ENCODE measurements at regions of chr12 and their contacts with region 1.

Region 1: GRCh38 chr12:90940872-90941499 is 14.0 kb downstream of the CCER1 start:
- DNase-seq: peak; percentile 75
- H3K4me3 ChIP-seq: no peak overlapping the region
- H3K27ac ChIP-seq: no peak overlapping the region
- H3K4me1 ChIP-seq: peaks cover 18% of the 10 kb centered on the region
- H3K27me3 ChIP-seq: no peaks in the 10 kb centered on the region
- CTCF ChIP-seq: peak; percentile 38 to 47
- POLR2A ChIP-seq: no peak

Region 2: GRCh38 chr12:89542912-89543592 is 1397.9 kb before region 1 on chr12:
- CTCF ChIA-PET with region 1: interaction called, 55 read pairs
- POLR2A ChIA-PET with region 1: no interaction called
- dilution Hi-C with region 1: no loop called
- intact Hi-C with region 1: loop called (anchors 1 kb)
- DNase-seq: peak; percentile 79
- H3K4me3 ChIP-seq: no peak overlapping the region
- H3K27ac ChIP-seq: no peak overlapping the region
- H3K4me1 ChIP-seq: peaks cover 20% of the 10 kb centered on the region
- H3K27me3 ChIP-seq: no peaks in the 10 kb centered on the region
- CTCF ChIP-seq: peak; percentile 80 to 82
- POLR2A ChIP-seq: no peak

Region 3: DNA sequence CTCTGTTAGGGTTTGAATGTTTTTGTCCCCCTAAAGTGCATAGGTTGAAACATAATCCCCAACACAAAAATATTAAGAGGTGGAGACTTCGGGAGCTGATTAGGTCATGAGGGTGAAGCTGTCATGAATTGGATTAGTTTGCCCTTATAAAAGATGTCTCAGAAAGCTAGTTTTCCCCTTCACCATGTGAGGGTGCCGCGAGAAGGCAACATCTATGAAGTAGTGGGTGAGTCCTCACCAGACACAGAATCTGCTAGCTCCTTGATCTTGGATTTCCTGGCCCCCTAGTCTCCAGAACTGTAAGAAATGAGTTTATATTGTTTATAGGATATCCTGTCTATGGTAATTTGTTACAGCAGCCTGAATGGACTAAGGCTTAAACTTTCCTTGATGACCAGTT is 930.9 kb before region 1 on chr12:
- CTCF ChIA-PET with region 1: interaction called, 17 read pairs
- POLR2A ChIA-PET with region 1: no interaction called
- dilution Hi-C with region 1: no loop called
- intact Hi-C with region 1: no loop called
- DNase-seq: peak; percentile 37
- H3K4me3 ChIP-seq: no peak overlapping the region
- H3K27ac ChIP-seq: no peak overlapping the region
- H3K4me1 ChIP-seq: no peaks in the 10 kb centered on the region
- H3K27me3 ChIP-seq: no peaks in the 10 kb centered on the region
- CTCF ChIP-seq: peak in 1 of 2 donors; percentile 14
- POLR2A ChIP-seq: no peak

Region 4: GRCh38 chr12:90695415-90695814 is 245.6 kb before region 1 on chr12:
- CTCF ChIA-PET with region 1: interaction called, 11 read pairs
- POLR2A ChIA-PET with region 1: no interaction called
- dilution Hi-C with region 1: no loop called
- intact Hi-C with region 1: loop called (anchors 1 kb)
- DNase-seq: peak; percentile 27
- H3K4me3 ChIP-seq: no peak overlapping the region
- H3K27ac ChIP-seq: no peak overlapping the region
- H3K4me1 ChIP-seq: peaks cover 13% of the 10 kb centered on the region
- H3K27me3 ChIP-seq: no peaks in the 10 kb centered on the region
- CTCF ChIP-seq: peak in 1 of 2 donors; percentile 3
- POLR2A ChIP-seq: no peak

Region 5: GRCh38 chr12:90959538-90960139 is 18.7 kb after region 1 on chr12:
- CTCF ChIA-PET with region 1: interaction called, 96 read pairs
- POLR2A ChIA-PET with region 1: no interaction called
- dilution Hi-C with region 1: no loop called
- intact Hi-C with region 1: loop called (anchors 1 kb)
- DNase-seq: peak; percentile 54
- H3K4me3 ChIP-seq: no peak overlapping the region
- H3K27ac ChIP-seq: no peak overlapping the region
- H3K4me1 ChIP-seq: no peaks in the 10 kb centered on the region
- H3K27me3 ChIP-seq: no peaks in the 10 kb centered on the region
- CTCF ChIP-seq: peak; percentile 57 to 74
- POLR2A ChIP-seq: no peak

Region 6: GRCh38 chr12:91326058-91327027 is 385.4 kb after region 1 on chr12:
- CTCF ChIA-PET with region 1: interaction called, 39 read pairs
- POLR2A ChIA-PET with region 1: no interaction called
- dilution Hi-C with region 1: no loop called
- intact Hi-C with region 1: no loop called
- DNase-seq: peak; percentile 59
- H3K4me3 ChIP-seq: no peak overlapping the region
- H3K27ac ChIP-seq: no peak overlapping the region
- H3K4me1 ChIP-seq: no peaks in the 10 kb centered on the region
- H3K27me3 ChIP-seq: no peaks in the 10 kb centered on the region
- CTCF ChIP-seq: peak; percentile 49 to 54
- POLR2A ChIP-seq: no peak